Cardiac septum (tissue), 1 donor: ENCODE measurements at regions of chr7 and their contacts with region 1.

Region 1: GRCh38 chr7:44581879-44582603 is at the start of gene TMED4:
- DNase-seq: peak; percentile 100
- total RNA-seq, gene TMED4: 73.8 TPM

Region 2: DNA sequence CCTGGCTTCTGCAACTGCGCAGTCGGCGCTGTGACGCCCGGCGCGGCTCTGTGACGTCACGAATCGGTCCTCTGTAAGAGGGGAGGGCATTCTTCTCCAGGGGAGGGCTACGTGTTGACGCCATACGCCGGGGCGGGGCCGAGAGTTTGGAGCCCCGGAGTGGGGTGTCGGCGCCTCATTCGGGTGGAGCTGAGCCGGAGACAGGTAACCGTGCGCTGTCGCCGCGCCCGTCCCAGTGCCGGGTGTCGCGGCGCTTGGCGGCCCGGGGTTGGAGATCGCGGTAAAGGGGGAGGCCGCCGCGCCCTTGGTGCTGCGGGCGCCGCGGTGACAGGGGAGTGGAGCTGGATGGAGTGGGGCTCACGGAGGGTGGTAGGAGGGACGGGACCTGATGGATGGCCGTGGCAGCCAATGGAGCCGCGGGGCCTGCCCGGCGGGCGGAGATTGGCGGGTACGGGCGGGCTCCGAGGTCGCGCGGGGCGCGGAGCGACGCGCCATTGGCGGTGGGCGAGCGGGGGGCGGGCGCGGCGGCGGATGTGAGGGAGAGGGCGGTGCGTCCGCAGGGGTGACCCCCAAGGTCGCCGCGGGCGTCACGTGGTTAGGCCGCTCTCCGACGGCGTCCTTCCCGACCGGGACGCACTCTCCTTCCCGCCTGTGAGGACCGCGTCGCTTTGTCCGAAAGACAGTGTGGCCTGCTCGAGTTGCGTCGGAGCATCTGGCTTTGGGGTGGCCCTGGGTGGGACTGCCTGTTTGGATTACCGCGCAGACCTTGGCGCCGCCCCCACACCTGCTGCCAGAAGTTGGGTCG is 24.6 kb after region 1 on chr7 and contains the start of gene OGDH:
- intact Hi-C with region 1: loop called (anchors 2 kb)
- DNase-seq: peak; percentile 100
- total RNA-seq, gene OGDH: 406 TPM

Region 3: DNA sequence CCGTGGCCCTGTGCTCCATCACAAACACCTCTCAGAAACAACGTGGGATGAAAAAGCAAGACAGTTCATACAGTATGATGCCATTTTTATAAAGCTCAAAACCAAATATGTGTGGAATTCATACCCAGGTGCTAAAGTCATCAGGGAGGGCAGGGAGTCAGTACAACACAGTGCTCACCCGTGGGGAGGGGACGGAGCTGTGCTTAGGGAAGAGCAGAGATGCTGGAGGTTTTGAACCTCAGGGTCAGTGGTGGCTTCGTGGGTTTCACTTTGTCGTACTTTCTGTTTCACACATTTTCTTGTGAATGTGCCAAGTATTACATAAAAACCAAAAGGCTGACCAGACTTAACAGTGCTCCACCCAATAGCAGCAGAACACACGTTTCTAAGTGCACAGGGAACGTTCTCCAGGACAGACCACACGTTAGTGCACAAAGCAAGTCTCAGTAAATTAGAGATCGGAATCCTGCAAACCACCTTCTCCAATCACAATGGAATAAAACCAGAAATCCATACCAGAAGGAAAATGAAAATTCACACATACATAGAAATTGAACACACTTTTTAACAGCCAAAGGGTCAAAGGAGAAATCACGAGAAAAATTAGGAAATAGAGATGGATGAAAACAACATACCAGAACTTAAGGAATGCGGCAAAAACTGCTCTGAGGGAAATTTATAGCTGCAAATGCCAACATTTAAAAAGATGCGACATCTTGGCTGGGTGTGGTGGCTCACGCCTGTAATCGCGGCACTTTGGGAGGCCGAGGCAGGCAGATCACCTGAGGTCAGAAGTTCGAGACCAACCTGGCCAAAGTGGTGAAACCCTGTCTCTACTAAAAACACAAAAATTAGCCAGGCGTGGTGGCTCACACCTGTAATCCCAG is 188.0 kb after region 1 on chr7:
- intact Hi-C with region 1: loop called (anchors 5 kb)
- DNase-seq: no peak

Region 4: GRCh38 chr7:44986218-44987053 is 404.4 kb after region 1 on chr7:
- intact Hi-C with region 1: loop called (anchors 10 kb)
- DNase-seq: peak; percentile 98